ENCODE measurements at regions of chr12 and their contacts with region 1.

Region 1: DNA sequence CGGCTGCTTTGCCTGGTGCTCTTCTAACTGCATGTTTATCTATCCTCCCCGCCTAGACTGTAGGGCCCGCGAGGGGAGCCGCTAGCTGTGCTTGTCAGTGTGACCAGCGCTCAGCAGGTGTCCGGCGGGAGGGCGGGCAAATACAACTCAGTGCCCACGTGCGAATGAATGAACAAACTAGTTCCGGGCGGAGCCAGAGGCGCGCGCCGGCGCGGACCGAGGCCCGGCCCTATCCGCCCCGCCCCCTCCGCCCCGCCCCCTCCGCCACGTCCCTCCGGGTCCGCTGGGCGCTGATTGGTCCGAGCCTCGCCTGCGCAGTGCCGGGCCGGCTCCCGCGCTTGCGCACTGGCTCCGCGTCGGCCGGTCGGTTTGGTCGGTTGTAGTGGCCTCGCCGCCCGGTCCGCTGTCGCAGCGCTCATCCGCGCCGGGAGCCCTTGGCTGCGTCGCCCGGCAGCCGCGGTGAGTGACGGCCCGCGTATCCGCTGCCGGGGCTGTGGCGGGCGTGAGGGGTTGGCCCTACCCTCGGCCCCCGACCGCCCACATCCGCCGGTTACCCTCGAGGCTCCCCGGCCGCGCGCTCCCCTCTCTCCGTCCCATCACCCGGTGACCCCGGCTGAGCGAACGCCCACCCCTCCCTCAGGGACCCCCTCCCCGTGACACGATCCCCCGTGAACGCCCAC is 60.0 kb downstream of the DDX51 start:
- DNase-seq: peak; percentile 92
- ATAC-seq: peak; percentile 92
- H3K4me3 ChIP-seq: peak overlapping the region; percentile 30 to 81 (median 71)
- H3K4me3 Mint-ChIP-seq: peak overlapping the region; percentile 92
- H3K27ac ChIP-seq: peak overlapping the region in 1 of 2 donors; percentile 83
- H3K27ac Mint-ChIP-seq: peak overlapping the region; percentile 85
- H3K4me1 ChIP-seq: peaks cover 15 to 20% of the 10 kb centered on the region in 2 donors
- H3K4me1 Mint-ChIP-seq: peaks cover 30% of the 10 kb centered on the region
- H3K27me3 ChIP-seq: no peaks in the 10 kb centered on the region
- H3K27me3 Mint-ChIP-seq: no peaks in the 10 kb centered on the region
- CTCF ChIP-seq: no peak

Region 2: GRCh38 chr12:130871286-130872178 is 1212.5 kb before region 1 on chr12 and contains the start of gene RAN:
- CTCF ChIA-PET with region 1: no interaction called
- POLR2A ChIA-PET with region 1: no interaction called
- intact Hi-C with region 1: loop called (anchors 10 kb)
- DNase-seq: peak; percentile 97
- ATAC-seq: peak; percentile 77
- H3K4me3 ChIP-seq: peak within 1 kb of the TSS; percentile 70 to 81 (median 73)
- H3K4me3 Mint-ChIP-seq: peak within 1 kb of the TSS; percentile 96
- H3K27ac ChIP-seq: peak within 1 kb of the TSS; percentile 78 to 84
- H3K27ac Mint-ChIP-seq: peak within 1 kb of the TSS; percentile 92
- H3K4me1 ChIP-seq: peaks cover 23 to 26% of the 10 kb centered on the region in 2 donors
- H3K4me1 Mint-ChIP-seq: peaks cover 35% of the 10 kb centered on the region
- H3K27me3 ChIP-seq: no peaks in the 10 kb centered on the region
- H3K27me3 Mint-ChIP-seq: no peaks in the 10 kb centered on the region
- CTCF ChIP-seq: no peak
- total RNA-seq, gene RAN: 289 and 298 TPM in 2 replicates

Region 3: DNA sequence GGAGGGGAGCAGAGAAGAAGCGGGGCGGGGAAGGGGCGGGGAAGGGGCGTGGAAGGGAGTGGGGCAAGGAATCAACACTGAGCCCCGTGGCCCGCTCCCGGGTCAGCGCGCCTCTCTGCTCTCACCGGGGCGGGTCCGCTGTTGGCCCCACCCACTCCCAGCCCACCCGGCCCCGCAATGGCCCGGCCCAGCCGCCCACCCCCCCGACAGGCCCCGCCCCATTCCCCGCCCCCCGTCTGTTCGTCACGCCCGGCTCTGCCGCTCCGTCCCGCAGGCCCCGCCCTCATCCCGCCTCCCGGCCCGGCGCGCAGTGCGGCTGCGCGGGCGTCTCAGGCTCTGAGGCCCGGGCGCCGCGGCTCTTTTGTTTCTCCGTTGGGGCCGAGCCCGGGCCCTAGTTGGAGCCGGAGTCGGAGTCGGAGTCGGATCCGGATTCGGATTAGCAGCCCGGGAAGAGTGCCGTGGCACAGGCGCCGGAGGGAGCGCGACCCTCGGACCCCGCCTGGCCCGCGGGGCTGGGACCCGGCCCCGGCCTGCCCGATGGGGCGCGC is 189.7 kb before region 1 on chr12 and contains the start of gene ULK1:
- CTCF ChIA-PET with region 1: no interaction called
- POLR2A ChIA-PET with region 1: no interaction called
- intact Hi-C with region 1: loop called (anchors 5 kb)
- DNase-seq: peak; percentile 91
- ATAC-seq: peak; percentile 80
- H3K4me3 ChIP-seq: peak within 1 kb of the TSS; percentile 49 to 74 (median 59)
- H3K4me3 Mint-ChIP-seq: peak within 1 kb of the TSS; percentile 91
- H3K27ac ChIP-seq: peak within 1 kb of the TSS; percentile 6 to 69
- H3K27ac Mint-ChIP-seq: peak within 1 kb of the TSS; percentile 88
- H3K4me1 ChIP-seq: peaks cover 18 to 23% of the 10 kb centered on the region in 2 donors
- H3K4me1 Mint-ChIP-seq: peaks cover 21% of the 10 kb centered on the region
- H3K27me3 ChIP-seq: no peaks in the 10 kb centered on the region
- H3K27me3 Mint-ChIP-seq: peaks cover 4% of the 10 kb centered on the region
- CTCF ChIP-seq: no peak
- total RNA-seq, gene ULK1: 59.5 and 83.3 TPM in 2 replicates

Region 4: DNA sequence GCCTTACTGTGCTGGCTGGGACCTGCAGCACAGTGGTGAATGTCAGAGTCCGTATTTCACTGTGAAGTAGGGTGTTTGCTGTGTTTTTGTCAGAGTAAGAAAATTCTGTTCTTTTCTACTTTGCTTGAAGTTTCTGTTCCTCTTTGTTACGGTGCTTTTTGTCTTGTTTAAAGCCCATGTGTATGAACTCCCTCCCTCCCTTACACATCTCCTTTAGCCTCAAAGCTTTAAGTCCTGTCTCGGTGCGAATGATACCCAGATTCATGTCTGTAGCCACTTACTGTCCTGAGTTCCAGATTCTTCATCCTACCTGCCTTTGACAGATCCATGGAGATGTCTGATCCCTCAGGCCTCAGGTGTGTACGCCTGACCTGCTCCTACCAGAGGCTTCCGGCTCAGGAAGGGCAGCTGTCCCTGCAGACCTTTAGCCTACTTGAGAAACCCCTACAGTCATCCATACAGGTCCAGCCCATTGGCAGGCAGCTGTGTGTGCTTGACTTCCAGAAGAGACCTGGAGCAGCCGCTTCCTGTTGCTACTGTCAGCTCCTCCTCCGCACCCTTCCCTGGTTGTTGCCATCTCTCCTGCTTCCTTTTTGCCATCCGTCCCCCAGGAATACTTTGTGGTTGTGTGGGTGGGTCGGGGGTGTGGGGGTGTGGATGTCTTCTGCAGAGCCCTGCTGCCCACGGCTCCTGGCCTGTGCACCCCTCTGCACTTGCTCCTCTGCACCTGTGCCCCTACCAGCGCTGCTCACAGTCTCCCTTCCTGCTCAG is 12.9 kb before region 1 on chr12:
- CTCF ChIA-PET with region 1: interaction called, 4 read pairs
- POLR2A ChIA-PET with region 1: interaction called, 8 read pairs
- intact Hi-C with region 1: loop called (anchors 1 kb)
- DNase-seq: peak; percentile 78
- ATAC-seq: peak; percentile 78
- H3K4me3 ChIP-seq: peak overlapping the region in 4 of 5 experiments; percentile 41 to 62 (median 57)
- H3K4me3 Mint-ChIP-seq: peak overlapping the region; percentile 80
- H3K27ac ChIP-seq: peak overlapping the region; percentile 74 to 80
- H3K27ac Mint-ChIP-seq: peak overlapping the region; percentile 93
- H3K4me1 ChIP-seq: peaks cover 75 to 83% of the 10 kb centered on the region in 2 donors
- H3K4me1 Mint-ChIP-seq: peaks cover 77% of the 10 kb centered on the region
- H3K27me3 ChIP-seq: no peaks in the 10 kb centered on the region
- H3K27me3 Mint-ChIP-seq: no peaks in the 10 kb centered on the region
- CTCF ChIP-seq: no peak

Region 5: GRCh38 chr12:132144115-132144812 is 60.2 kb after region 1 on chr12 and contains the starts of genes DDX51 and NOC4L:
- CTCF ChIA-PET with region 1: no interaction called
- POLR2A ChIA-PET with region 1: no interaction called
- intact Hi-C with region 1: loop called (anchors 1 kb)
- DNase-seq: peak; percentile 98
- ATAC-seq: peak; percentile 94
- H3K4me3 ChIP-seq: peak within 1 kb of the TSS; percentile 16 to 90 (median 69)
- H3K4me3 Mint-ChIP-seq: peak within 1 kb of the TSS; percentile 96
- H3K27ac ChIP-seq: peak within 1 kb of the TSS; percentile 47 to 95
- H3K27ac Mint-ChIP-seq: peak within 1 kb of the TSS; percentile 99
- H3K4me1 ChIP-seq: peaks cover 15 to 21% of the 10 kb centered on the region in 2 donors
- H3K4me1 Mint-ChIP-seq: peaks cover 27% of the 10 kb centered on the region
- H3K27me3 ChIP-seq: no peaks in the 10 kb centered on the region
- H3K27me3 Mint-ChIP-seq: no peaks in the 10 kb centered on the region
- CTCF ChIP-seq: no peak
- total RNA-seq, gene DDX51: 46.3 and 51.3 TPM in 2 replicates
- total RNA-seq, gene NOC4L: 21.9 and 23.3 TPM in 2 replicates

Region 6: DNA sequence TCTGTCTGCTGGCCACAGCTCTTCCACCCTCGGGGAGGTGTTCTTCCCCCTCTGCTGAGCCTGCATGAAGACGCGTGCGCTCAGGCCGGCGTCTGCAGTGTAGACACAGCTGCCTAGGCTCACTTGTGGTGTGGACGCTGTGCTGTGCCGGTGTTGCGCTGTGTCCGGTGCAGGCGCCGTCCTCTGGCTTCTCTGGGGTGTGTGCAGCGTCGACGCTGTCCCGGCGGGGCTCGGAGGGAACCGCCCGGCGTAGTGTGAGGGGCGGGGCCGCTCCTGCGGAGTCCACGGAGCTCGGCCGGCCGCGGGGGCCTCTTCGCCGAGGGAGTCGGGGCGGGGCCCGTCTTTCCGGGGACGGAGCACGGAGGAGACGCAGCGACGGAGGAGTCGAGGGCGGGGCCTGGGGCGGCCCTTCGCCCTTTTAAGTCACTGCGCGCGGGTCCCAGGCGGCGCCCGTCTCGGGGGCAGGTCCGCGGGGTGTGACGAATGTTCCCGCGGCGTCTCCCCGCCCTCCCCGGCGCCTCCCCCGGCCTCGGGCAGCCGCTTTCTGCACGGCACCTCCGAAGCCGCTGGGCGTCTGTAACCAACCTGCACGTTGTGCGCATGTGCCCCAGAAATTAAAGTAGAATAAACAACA is 105.4 kb after region 1 on chr12:
- CTCF ChIA-PET with region 1: no interaction called
- POLR2A ChIA-PET with region 1: no interaction called
- intact Hi-C with region 1: loop called (anchors 1 kb)
- DNase-seq: peak; percentile 89
- ATAC-seq: peak; percentile 95
- H3K4me3 ChIP-seq: peak overlapping the region; percentile 48 to 69 (median 61)
- H3K4me3 Mint-ChIP-seq: peak overlapping the region; percentile 90
- H3K27ac ChIP-seq: peak overlapping the region; percentile 42 to 47
- H3K27ac Mint-ChIP-seq: peak overlapping the region; percentile 72
- H3K4me1 ChIP-seq: peaks cover 29 to 40% of the 10 kb centered on the region in 2 donors
- H3K4me1 Mint-ChIP-seq: peaks cover 14% of the 10 kb centered on the region
- H3K27me3 ChIP-seq: peaks cover 0 to 2% (median under 1%) of the 10 kb centered on the region in 4 experiments
- H3K27me3 Mint-ChIP-seq: no peaks in the 10 kb centered on the region
- CTCF ChIP-seq: no peak

Region 7: GRCh38 chr12:132828706-132829534 is 744.8 kb after region 1 on chr12 and contains the start of gene GOLGA3:
- CTCF ChIA-PET with region 1: no interaction called
- POLR2A ChIA-PET with region 1: no interaction called
- intact Hi-C with region 1: loop called (anchors 5 kb)
- DNase-seq: peak; percentile 97
- ATAC-seq: peak; percentile 94
- H3K4me3 ChIP-seq: peak within 1 kb of the TSS; percentile 81 to 90 (median 85)
- H3K4me3 Mint-ChIP-seq: peak within 1 kb of the TSS; percentile 96
- H3K27ac ChIP-seq: peak within 1 kb of the TSS; percentile 99
- H3K27ac Mint-ChIP-seq: peak within 1 kb of the TSS; percentile 100
- H3K4me1 ChIP-seq: peaks cover 27 to 29% of the 10 kb centered on the region in 2 donors
- H3K4me1 Mint-ChIP-seq: peaks cover 42% of the 10 kb centered on the region
- H3K27me3 ChIP-seq: no peaks in the 10 kb centered on the region
- H3K27me3 Mint-ChIP-seq: no peaks in the 10 kb centered on the region
- CTCF ChIP-seq: no peak
- total RNA-seq, gene GOLGA3: 66.0 and 68.9 TPM in 2 replicates